GM10248 (cell line): ENCODE measurements at regions of chr17 and their contacts with region 1.

Region 1: DNA sequence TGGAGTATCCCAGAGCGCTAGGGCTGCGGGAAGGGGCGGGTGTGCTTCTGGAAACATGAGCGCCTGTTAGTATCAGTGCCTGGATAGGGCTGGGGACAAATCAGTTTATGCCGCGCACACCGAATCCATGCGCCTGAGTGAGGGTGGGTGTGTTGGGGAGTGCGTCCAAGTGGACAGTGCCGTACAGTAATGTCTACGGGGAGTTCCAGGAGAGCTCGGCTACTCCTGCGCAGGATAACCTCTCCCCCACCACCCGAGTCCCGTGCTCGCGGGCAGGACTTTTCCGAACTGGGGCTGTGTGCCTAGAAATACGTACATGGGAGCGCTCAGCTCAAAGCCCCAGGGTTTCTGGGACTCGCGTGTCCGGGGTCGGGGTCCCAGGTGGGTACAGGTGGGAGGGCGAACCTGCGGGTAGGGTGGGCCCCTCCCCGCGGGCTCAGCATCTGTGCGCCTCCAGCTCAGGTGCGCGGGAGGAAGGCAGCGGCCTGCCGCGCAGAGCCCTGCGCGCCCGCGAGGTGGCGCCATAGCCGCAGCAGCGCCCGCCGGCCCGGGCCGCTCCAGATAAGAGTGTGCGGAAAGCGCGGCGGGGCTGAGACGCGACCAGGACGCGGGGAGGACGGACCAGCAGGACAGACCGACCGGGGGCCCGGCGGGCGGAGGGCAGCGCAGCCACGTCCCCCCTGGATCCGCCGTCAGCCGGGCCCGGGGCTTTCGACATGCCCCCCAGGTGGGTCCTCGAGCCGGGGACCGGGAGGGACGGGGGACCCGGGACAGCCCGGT is at the start of gene HIC1:
- DNase-seq: peak; percentile 83
- CTCF ChIP-seq: peak; percentile 94

Region 2: GRCh38 chr17:1958134-1958881 is 96.4 kb before region 1 on chr17:
- CTCF ChIA-PET with region 1: no interaction called
- POLR2A ChIA-PET with region 1: no interaction called
- DNase-seq: no peak
- CTCF ChIP-seq: no peak

Region 3: GRCh38 chr17:2064980-2065785 is 10.5 kb after region 1 on chr17:
- CTCF ChIA-PET with region 1: interaction called, 23 read pairs
- POLR2A ChIA-PET with region 1: interaction called, 10 read pairs
- DNase-seq: peak; percentile 78
- CTCF ChIP-seq: peak; percentile 70

Region 4: GRCh38 chr17:2094891-2095535 is 40.3 kb after region 1 on chr17:
- CTCF ChIA-PET with region 1: interaction called, 188 read pairs
- POLR2A ChIA-PET with region 1: interaction called, 3 read pairs
- DNase-seq: peak; percentile 43
- CTCF ChIP-seq: peak; percentile 55

Region 5: GRCh38 chr17:2222901-2223616 is 168.4 kb after region 1 on chr17:
- CTCF ChIA-PET with region 1: interaction called, 26 read pairs
- POLR2A ChIA-PET with region 1: interaction called, 6 read pairs
- DNase-seq: peak; percentile 50
- CTCF ChIP-seq: no peak

Region 6: DNA sequence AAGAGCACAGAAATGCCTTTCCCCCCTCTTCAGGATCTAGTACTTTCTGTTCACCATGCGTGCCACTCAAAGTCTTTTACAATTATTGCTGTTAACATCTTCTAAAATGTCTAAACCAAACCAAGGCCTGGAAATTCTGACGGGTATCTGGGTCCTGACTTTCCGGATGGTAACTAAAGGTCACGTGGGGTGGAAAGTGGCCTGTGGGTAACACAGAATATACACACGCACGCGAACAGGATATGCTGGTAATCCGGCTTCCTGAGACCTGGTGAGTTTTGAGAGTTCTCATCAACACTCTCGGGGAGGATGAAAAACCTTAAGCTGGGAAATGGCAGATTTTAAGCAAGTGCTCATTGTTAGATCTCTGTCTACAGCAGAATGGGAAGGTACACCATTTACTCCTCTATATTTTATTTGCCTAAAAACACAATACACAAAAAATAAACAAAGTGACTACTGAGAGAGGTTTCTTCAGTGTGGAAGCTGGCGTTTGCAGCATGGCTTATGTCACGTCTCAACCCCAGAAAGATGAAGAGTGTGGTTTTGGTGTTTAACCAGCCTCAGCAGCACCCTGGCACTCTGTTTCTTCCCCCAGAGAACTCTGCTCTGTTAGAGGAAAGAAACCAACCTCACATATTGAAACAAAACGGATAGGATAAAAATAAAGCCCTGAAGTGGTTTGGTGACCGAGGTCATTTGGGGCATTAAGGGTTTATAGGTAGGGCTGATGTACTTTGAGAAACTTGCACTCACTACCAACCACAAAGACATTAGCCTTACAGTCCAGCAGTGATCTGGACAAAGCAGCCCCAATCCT is 211.6 kb after region 1 on chr17:
- CTCF ChIA-PET with region 1: interaction called, 70 read pairs
- POLR2A ChIA-PET with region 1: no interaction called
- DNase-seq: peak; percentile 55
- CTCF ChIP-seq: no peak

Region 7: DNA sequence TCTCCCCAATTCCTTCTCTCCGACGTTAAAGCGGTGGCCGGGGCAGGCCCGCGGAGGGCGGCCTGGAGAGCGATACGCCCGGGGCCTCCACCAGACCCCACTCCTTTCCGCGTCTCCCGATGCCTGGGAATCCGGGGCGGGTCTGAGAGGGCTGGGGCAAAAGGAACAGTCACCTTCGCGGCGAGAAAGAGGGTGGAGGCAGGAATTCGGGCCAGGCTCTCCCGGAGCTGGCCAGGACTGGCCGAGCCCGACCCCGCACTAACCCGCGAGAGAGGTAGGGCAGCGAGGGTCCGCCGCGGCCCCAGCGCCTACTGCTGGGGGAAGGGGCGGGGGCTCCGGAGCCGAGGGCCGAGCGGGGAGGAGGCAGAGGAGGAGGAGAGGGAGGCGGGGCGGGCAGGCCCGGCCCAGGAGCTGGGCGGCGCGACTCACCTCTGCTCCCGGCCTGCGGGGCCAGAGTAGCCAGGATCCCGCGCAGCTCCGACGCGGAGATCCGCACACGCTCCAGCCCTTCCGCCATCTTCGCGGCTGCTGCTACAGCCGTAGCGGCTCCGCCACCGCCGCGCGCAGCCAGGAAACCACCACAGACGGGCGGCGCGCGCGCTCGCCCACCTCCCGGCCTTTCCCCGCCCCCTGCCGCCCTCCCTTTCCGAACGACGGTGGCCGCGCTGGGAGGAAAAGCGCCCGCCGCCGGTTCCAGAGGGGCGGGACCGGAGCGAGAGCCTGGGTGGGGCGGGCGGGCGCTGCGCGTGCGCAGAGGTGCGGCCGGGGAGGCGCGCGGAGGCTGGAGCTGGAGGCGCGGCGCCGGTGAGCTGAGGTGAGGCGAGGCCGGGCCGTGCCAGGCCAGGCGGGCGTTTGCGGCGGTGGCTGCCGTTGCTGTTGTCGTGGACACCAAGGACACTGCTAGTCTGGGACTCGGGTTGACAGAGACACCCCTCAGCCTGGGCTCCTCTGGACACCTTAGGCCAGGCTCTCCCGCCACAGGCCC is 248.8 kb after region 1 on chr17 and contains the starts of genes SMG6 and SRR:
- CTCF ChIA-PET with region 1: interaction called, 11 read pairs
- POLR2A ChIA-PET with region 1: interaction called, 4 read pairs
- DNase-seq: peak; percentile 99
- CTCF ChIP-seq: no peak

Region 8: DNA sequence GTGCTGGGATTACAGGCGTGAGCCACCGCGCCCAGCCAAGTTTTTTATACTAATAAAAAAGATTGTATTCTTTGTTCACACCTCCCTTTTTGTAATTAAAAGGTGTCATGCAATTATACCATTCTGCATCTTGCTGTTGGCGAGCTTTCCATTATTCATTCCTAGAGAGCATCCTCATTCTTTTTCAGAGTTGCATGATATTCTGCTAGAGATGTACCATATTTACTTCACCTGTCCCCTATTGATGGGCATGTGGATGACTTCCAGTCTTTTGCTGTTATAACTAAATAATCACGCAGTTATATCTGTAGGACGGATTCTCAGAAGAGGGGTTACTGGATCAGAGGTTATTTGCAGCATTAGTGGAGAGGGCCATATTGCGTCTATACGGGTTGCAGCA is 299.6 kb after region 1 on chr17:
- CTCF ChIA-PET with region 1: interaction called, 23 read pairs
- POLR2A ChIA-PET with region 1: no interaction called
- DNase-seq: no peak
- CTCF ChIP-seq: no peak